Lower leg skin (tissue), 4 donors: ENCODE measurements at regions of chr6 and their contacts with region 1.

Region 1: DNA sequence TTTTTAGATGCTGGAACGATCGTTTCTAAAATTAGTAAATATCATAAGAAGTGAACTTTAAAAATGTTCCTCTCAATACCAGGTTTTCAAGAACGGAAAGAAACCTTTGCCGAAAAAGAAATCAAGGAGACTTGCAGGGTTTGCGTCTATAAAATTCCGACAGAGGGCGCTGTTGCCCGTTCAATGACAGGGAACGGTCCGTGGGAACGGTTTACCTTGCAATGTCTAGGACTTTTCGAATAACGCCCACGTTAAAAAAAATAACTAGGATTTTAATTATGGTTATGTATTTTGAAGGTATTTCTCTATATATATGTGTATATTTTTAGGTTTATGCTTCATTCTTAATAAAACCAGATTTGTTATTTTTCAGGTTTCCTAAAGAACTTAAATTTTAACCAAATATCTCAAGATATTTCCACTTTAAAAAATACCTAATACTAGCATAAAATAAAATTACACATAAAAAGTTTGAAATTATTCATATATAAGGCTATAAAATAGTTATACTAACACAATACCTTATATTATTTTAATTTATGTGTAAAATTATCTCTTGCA is 2.5 kb upstream of the TFAP2B start:
- DNase-seq: peak; percentile 79 to 91
- H3K4me3 ChIP-seq: peak overlapping the region; percentile 40
- CTCF ChIP-seq: peak in 1 of 3 donors; percentile 35
- POLR2A ChIP-seq: no peak

Region 2: GRCh38 chr6:51339719-51340118 is 523.5 kb after region 1 on chr6:
- intact Hi-C with region 1: loop called (anchors 10 kb)
- DNase-seq: no peak
- H3K4me3 ChIP-seq: no peak overlapping the region
- CTCF ChIP-seq: no peak
- POLR2A ChIP-seq: no peak

Region 3: DNA sequence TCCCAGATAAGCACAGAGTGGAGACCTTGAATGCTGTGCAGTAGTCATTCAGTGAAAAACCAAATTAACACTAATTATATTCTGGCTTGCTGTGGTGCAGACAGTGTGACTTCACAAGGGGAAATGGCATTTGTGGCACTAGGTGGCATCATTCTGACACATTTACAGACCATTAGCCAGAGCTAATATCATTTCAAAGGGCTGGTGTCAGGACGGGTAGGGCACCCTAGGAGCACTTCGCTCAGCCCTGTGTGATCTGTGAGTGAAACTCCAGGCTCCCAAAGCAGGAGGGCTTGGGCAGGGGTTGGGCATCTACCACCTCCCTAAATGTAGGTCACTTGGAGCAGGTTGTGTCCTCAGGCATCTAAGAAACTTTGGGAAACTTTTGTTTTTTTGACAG is 715.4 kb after region 1 on chr6:
- intact Hi-C with region 1: loop called (anchors 10 kb)
- DNase-seq: no peak
- H3K4me3 ChIP-seq: no peak overlapping the region
- CTCF ChIP-seq: no peak
- POLR2A ChIP-seq: no peak

Region 4: GRCh38 chr6:52020945-52021570 is 1204.9 kb after region 1 on chr6:
- intact Hi-C with region 1: loop called (anchors 10 kb)
- DNase-seq: no peak
- H3K4me3 ChIP-seq: no peak overlapping the region
- CTCF ChIP-seq: no peak
- POLR2A ChIP-seq: no peak